Heart right ventricle (tissue), 16 donors: ENCODE measurements at regions of chr12 and their contacts with region 1.

Region 1: DNA sequence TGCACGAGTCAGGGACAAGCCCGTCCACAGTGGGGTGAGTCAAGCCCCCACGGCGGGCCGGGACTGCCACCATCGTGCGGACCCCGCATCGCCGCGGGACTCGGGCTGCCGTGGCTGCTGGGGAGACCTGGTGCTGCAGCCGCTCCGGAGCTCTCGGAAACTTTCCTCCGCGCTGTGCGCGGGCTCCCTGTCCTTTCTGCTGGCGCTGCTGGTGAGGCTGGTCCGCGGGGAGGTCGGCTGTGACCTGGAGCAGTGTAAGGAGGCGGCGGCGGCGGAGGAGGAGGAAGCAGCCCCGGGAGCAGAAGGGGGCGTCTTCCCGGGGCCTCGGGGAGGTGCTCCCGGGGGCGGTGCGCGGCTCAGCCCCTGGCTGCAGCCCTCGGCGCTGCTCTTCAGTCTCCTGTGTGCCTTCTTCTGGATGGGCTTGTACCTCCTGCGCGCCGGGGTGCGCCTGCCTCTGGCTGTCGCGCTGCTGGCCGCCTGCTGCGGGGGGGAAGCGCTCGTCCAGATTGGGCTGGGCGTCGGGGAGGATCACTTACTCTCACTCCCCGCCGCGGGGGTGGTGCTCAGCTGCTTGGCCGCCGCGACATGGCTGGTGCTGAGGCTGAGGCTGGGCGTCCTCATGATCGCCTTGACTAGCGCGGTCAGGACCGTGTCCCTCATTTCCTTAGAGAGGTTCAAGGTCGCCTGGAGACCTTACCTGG is 1.1 kb downstream of the PDE3A start:
- DNase-seq: peak; percentile 84 to 86
- ATAC-seq: peak; percentile 75 to 90 (median 81)
- H3K4me3 ChIP-seq: peak overlapping the region; percentile 41 to 84 (median 72)
- H3K27ac ChIP-seq: peak overlapping the region; percentile 91 to 97 (median 96)
- H3K4me1 ChIP-seq: peaks cover 0 to 19% (median 13%) of the 10 kb centered on the region in 9 donors
- H3K27me3 ChIP-seq: peaks cover 0 to 59% (median 0%) of the 10 kb centered on the region in 7 donors
- CTCF ChIP-seq: peak in 7 of 9 donors; percentile 6 to 55 (median 33)

Region 2: GRCh38 chr12:19757317-19757877 is 612.1 kb before region 1 on chr12:
- intact Hi-C with region 1: loop called in 2 of 10 experiments (anchors 5 kb)
- DNase-seq: no peak
- ATAC-seq: peak in 5 of 8 donors; percentile 48 to 71 (median 55)
- H3K4me3 ChIP-seq: no peak overlapping the region
- H3K27ac ChIP-seq: peak overlapping the region in 4 of 10 donors; percentile 6 to 42 (median 30)
- H3K4me1 ChIP-seq: peaks cover 0 to 12% (median 0%) of the 10 kb centered on the region in 9 donors
- H3K27me3 ChIP-seq: no peaks in the 10 kb centered on the region
- CTCF ChIP-seq: peak; percentile 44 to 77 (median 69)

Region 3: DNA sequence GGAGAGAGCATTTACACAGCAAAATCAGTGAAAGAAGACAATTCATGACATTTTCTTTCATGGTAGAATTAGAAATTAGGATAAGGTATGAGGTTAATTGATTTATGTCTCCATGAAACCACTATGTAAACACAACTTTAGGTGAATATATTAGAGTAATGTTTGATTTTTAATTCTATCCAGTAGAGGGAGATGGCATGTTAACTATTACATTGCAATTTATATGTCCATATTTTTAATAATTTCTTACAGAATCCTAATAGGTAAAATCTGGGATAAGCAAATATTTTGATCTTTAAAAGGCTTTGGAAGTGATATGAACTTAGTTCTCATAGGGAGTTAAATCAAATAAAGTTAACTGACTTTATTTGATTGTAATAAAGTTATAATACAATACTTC is 374.5 kb before region 1 on chr12:
- intact Hi-C with region 1: loop called in 2 of 10 experiments (anchors 5 to 10 kb)
- DNase-seq: no peak
- ATAC-seq: no peak
- H3K4me3 ChIP-seq: no peak overlapping the region
- H3K27ac ChIP-seq: no peak overlapping the region
- H3K4me1 ChIP-seq: peaks cover 0 to 13% (median 4%) of the 10 kb centered on the region in 9 donors
- H3K27me3 ChIP-seq: no peaks in the 10 kb centered on the region
- CTCF ChIP-seq: peak in 6 of 9 donors; percentile 17 to 50 (median 44)

Region 4: GRCh38 chr12:20212658-20213555 is 156.5 kb before region 1 on chr12:
- intact Hi-C with region 1: loop called in 5 of 10 experiments (anchors 5 to 10 kb)
- DNase-seq: peak; percentile 76 to 89
- ATAC-seq: peak; percentile 95 to 99 (median 98)
- H3K4me3 ChIP-seq: peak overlapping the region in 9 of 10 donors; percentile 0 to 37 (median 16)
- H3K27ac ChIP-seq: peak overlapping the region; percentile 53 to 86 (median 78)
- H3K4me1 ChIP-seq: peaks cover 5 to 48% (median 31%) of the 10 kb centered on the region in 9 donors
- H3K27me3 ChIP-seq: no peaks in the 10 kb centered on the region
- CTCF ChIP-seq: no peak

Region 5: DNA sequence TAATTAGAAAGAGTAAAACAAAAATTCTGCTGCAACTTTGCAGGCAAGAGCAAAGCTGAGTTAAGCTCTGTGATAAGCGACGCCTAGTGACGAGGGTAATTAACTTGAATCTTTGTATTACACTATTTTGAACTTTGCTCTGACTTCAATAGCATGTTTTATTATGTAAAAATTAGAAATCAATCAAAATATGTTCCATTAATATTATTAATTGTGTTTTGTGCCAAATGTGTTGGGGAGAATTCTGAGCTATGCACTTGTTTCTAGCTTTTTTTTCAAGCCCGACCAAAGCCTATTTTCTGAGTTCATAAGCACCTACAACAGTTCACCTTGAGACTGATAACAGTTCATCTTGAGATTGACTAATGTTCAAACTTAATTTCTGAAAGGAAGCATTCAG is 91.2 kb before region 1 on chr12:
- intact Hi-C with region 1: loop called in 5 of 10 experiments (anchors 2 to 5 kb)
- DNase-seq: no peak
- ATAC-seq: no peak
- H3K4me3 ChIP-seq: peak overlapping the region in 4 of 10 donors; percentile 5 to 8 (median 6)
- H3K27ac ChIP-seq: peak overlapping the region in 4 of 10 donors; percentile 1 to 39 (median 27)
- H3K4me1 ChIP-seq: peaks cover 0 to 13% (median 5%) of the 10 kb centered on the region in 9 donors
- H3K27me3 ChIP-seq: no peaks in the 10 kb centered on the region
- CTCF ChIP-seq: peak in 3 of 9 donors; percentile 32 to 38 (median 35)

Region 6: DNA sequence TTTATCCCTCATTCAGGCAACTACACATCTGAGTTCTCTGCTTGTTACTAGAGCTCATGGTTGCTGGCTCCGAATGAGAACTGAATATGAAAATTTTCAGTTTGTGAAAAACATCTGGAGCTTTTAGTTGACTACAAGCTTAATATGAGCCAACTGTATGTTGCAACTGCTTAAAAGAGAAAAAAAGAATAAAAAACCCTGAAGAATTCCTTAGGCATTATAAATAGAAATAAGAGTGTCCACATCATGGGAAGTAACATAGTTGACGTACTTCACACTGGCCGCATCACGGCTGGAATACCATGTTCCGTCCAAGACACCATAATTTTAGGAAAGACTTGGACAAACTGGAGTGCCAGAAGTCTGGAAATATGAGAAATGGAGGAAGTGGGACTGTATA is 56.7 kb after region 1 on chr12:
- intact Hi-C with region 1: no loop called
- DNase-seq: peak; percentile 30 to 56
- ATAC-seq: peak; percentile 75 to 92 (median 82)
- H3K4me3 ChIP-seq: no peak overlapping the region
- H3K27ac ChIP-seq: peak overlapping the region in 9 of 10 donors; percentile 26 to 76 (median 65)
- H3K4me1 ChIP-seq: peaks cover 4 to 65% (median 46%) of the 10 kb centered on the region in 9 donors
- H3K27me3 ChIP-seq: no peaks in the 10 kb centered on the region
- CTCF ChIP-seq: no peak

Region 7: GRCh38 chr12:20549107-20549719 is 179.8 kb after region 1 on chr12:
- intact Hi-C with region 1: loop called in 1 of 10 experiments (anchors 10 kb)
- DNase-seq: peak in 1 of 2 donors; percentile 33
- ATAC-seq: peak in 6 of 8 donors; percentile 42 to 79 (median 66)
- H3K4me3 ChIP-seq: no peak overlapping the region
- H3K27ac ChIP-seq: peak overlapping the region in 6 of 10 donors; percentile 28 to 59 (median 52)
- H3K4me1 ChIP-seq: peaks cover 0 to 61% (median 35%) of the 10 kb centered on the region in 9 donors
- H3K27me3 ChIP-seq: no peaks in the 10 kb centered on the region
- CTCF ChIP-seq: peak; percentile 36 to 69 (median 56)